ENCODE measurements at regions of chr11 and their contacts with region 1.

Region 1: DNA sequence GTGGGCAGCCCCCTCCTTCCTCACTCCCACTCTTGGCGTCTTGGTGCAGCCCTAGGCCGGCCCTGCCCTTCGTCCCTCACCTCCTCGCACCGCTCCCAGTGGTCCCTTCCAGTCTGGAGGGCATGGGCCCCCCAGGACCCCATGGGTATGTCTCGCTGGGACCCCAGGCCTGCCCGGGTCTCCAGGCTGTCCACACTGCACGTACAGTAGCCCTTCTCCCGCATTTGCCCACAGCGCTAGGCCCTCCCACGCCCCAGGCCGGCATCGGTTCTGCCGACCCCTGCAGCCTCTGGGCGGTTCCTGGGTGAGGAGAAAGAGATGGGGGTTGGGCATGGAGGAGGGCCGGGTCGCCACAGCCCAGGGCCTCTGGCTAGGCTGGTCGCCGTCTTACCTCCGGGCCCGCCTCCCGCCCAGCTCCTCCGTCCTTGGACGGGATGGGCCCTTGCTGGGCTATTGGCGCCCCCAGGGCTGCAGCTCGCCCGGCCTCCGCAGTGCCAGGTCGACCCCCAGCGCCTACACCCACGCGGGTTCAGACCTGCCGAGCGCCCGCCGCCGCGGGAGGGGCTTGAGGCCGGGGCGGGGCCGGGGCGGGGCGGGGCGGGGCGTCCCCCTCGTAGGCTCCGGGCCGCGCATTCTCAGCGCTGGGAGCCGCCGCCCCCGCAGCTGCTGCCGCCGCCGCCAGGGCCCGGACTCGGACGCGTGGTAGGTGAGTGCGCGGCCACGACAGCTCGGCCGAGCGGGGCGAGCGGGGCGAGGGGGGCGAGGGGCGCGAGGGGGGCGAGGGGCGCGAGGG is at the start of gene CD151:
- DNase-seq: peak; percentile 71
- ATAC-seq: peak; percentile 48
- H3K4me3 Mint-ChIP-seq: peak within 1 kb of the TSS; percentile 62
- H3K27ac Mint-ChIP-seq: no peak within 1 kb of the TSS
- H3K4me1 Mint-ChIP-seq: peaks cover 17% of the 10 kb centered on the region
- H3K27me3 Mint-ChIP-seq: peaks cover 29% of the 10 kb centered on the region
- total RNA-seq, gene CD151: 36.4 to 37.4 TPM

Region 2: GRCh38 chr11:803770-804598 is 28.5 kb before region 1 on chr11:
- POLR2A ChIA-PET with region 1: interaction called, 10 read pairs
- DNase-seq: no peak
- ATAC-seq: no peak
- H3K4me3 Mint-ChIP-seq: peak overlapping the region; percentile 84
- H3K27ac Mint-ChIP-seq: peak overlapping the region; percentile 80
- H3K4me1 Mint-ChIP-seq: peaks cover 12% of the 10 kb centered on the region
- H3K27me3 Mint-ChIP-seq: no peaks in the 10 kb centered on the region

Region 3: GRCh38 chr11:854601-855329 is 22.2 kb after region 1 on chr11:
- POLR2A ChIA-PET with region 1: no interaction called
- DNase-seq: no peak
- ATAC-seq: no peak
- H3K4me3 Mint-ChIP-seq: no peak overlapping the region
- H3K27ac Mint-ChIP-seq: no peak overlapping the region
- H3K4me1 Mint-ChIP-seq: no peaks in the 10 kb centered on the region
- H3K27me3 Mint-ChIP-seq: no peaks in the 10 kb centered on the region